CD8-positive, alpha-beta T cell (primary cell): ENCODE measurements at regions of chr1 and their contacts with region 1.

Region 1: GRCh38 chr1:41891199-41891896 is 27.4 kb downstream of the HIVEP3 start:
- DNase-seq: peak; percentile 22 to 89 (median 64)
- ATAC-seq: peak; percentile 98
- H3K4me3 ChIP-seq: peak overlapping the region; percentile 53 to 56
- H3K4me3 Mint-ChIP-seq: peak overlapping the region; percentile 81
- H3K27ac ChIP-seq: peak overlapping the region; percentile 58 to 74
- H3K27ac Mint-ChIP-seq: peak overlapping the region; percentile 93
- H3K4me1 ChIP-seq: peaks cover 28% of the 10 kb centered on the region
- H3K4me1 Mint-ChIP-seq: peaks cover 46% of the 10 kb centered on the region
- H3K27me3 ChIP-seq: no peaks in the 10 kb centered on the region
- H3K27me3 Mint-ChIP-seq: no peaks in the 10 kb centered on the region
- CTCF ChIP-seq: peak; percentile 60

Region 2: DNA sequence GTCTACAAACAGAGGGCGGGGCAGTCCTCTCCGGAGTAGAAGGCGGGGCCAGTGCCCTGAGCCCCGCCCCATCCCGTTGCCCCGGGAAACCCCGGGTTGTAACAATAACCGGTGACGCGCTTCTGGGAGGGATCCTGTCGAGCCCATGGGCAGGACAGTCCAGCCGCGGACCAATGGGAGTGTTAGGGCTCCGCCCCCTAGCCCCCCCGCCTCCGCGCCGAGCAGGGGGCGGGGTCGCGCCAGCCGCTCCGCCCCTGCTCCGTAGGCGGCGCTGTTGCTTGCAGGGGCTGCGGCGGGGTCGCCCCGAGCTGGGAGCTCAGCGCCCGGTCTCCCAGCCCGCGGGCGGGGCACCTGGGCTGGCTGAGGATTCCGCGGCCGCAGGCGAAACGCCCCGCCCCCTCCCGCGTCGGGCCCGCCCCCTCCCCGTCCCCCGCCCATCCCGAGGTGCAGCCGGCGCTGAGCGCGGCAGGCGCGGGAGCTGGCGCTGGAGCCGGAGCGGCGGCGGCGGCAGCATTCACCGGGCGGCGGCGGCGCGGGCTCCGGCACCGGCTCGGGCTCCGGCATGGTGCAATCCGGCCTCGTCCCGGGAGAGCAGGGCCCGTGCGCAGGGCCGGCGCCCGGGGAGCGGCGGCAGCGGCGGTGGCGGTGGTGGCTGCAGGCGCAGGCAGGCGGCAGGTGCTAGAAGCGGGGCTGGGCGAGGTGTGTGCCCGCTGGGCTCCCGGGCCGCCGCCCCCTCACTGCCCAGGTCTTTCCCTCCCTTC is 530.2 kb before region 1 on chr1 and contains the start of gene FOXO6:
- CTCF ChIA-PET with region 1: no interaction called
- POLR2A ChIA-PET with region 1: no interaction called
- intact Hi-C with region 1: loop called in 1 of 2 experiments (anchors 10 kb)
- DNase-seq: peak; percentile 85 to 97 (median 94)
- ATAC-seq: peak; percentile 90
- H3K4me3 ChIP-seq: peak within 1 kb of the TSS; percentile 35 to 52
- H3K4me3 Mint-ChIP-seq: peak within 1 kb of the TSS; percentile 82
- H3K27ac ChIP-seq: peak within 1 kb of the TSS; percentile 14 to 25
- H3K27ac Mint-ChIP-seq: peak within 1 kb of the TSS; percentile 28
- H3K4me1 ChIP-seq: peaks cover 22% of the 10 kb centered on the region
- H3K4me1 Mint-ChIP-seq: peaks cover 23% of the 10 kb centered on the region
- H3K27me3 ChIP-seq: peaks cover 10 to 11% of the 10 kb centered on the region in 2 experiments
- H3K27me3 Mint-ChIP-seq: peaks cover 29% of the 10 kb centered on the region
- CTCF ChIP-seq: no peak
- total RNA-seq, gene FOXO6: 1.4 to 1.7 TPM

Region 3: GRCh38 chr1:41751804-41752513 is 139.4 kb before region 1 on chr1:
- CTCF ChIA-PET with region 1: no interaction called
- POLR2A ChIA-PET with region 1: no interaction called
- intact Hi-C with region 1: loop called (anchors 1 to 5 kb)
- DNase-seq: peak in 1 of 9 experiments; percentile 38
- ATAC-seq: no peak
- H3K4me3 ChIP-seq: no peak overlapping the region
- H3K4me3 Mint-ChIP-seq: no peak overlapping the region
- H3K27ac ChIP-seq: no peak overlapping the region
- H3K27ac Mint-ChIP-seq: peak overlapping the region; percentile 55
- H3K4me1 ChIP-seq: peaks cover 47% of the 10 kb centered on the region
- H3K4me1 Mint-ChIP-seq: peaks cover 53% of the 10 kb centered on the region
- H3K27me3 ChIP-seq: no peaks in the 10 kb centered on the region
- H3K27me3 Mint-ChIP-seq: no peaks in the 10 kb centered on the region
- CTCF ChIP-seq: no peak

Region 4: GRCh38 chr1:41802532-41803501 is 88.5 kb before region 1 on chr1:
- CTCF ChIA-PET with region 1: interaction called, 3 read pairs
- POLR2A ChIA-PET with region 1: interaction called, 6 read pairs
- intact Hi-C with region 1: loop called in 1 of 2 experiments (anchors 2 kb)
- DNase-seq: peak in 8 of 9 experiments; percentile 14 to 74 (median 42)
- ATAC-seq: peak; percentile 42
- H3K4me3 ChIP-seq: peak overlapping the region in 1 of 2 experiments; percentile 0
- H3K4me3 Mint-ChIP-seq: peak overlapping the region; percentile 61
- H3K27ac ChIP-seq: peak overlapping the region; percentile 26 to 75
- H3K27ac Mint-ChIP-seq: peak overlapping the region; percentile 94
- H3K4me1 ChIP-seq: peaks cover 81% of the 10 kb centered on the region
- H3K4me1 Mint-ChIP-seq: peaks cover 87% of the 10 kb centered on the region
- H3K27me3 ChIP-seq: no peaks in the 10 kb centered on the region
- H3K27me3 Mint-ChIP-seq: no peaks in the 10 kb centered on the region
- CTCF ChIP-seq: no peak

Region 5: GRCh38 chr1:41812051-41812450 is 79.3 kb before region 1 on chr1:
- CTCF ChIA-PET with region 1: interaction called, 5 read pairs
- POLR2A ChIA-PET with region 1: interaction called, 4 read pairs
- intact Hi-C with region 1: loop called (anchors 2 to 5 kb)
- DNase-seq: peak in 8 of 9 experiments; percentile 25 to 71 (median 42)
- ATAC-seq: peak; percentile 62
- H3K4me3 ChIP-seq: no peak overlapping the region
- H3K4me3 Mint-ChIP-seq: no peak overlapping the region
- H3K27ac ChIP-seq: no peak overlapping the region
- H3K27ac Mint-ChIP-seq: no peak overlapping the region
- H3K4me1 ChIP-seq: peaks cover 16% of the 10 kb centered on the region
- H3K4me1 Mint-ChIP-seq: peaks cover 28% of the 10 kb centered on the region
- H3K27me3 ChIP-seq: no peaks in the 10 kb centered on the region
- H3K27me3 Mint-ChIP-seq: no peaks in the 10 kb centered on the region
- CTCF ChIP-seq: peak; percentile 58

Region 6: DNA sequence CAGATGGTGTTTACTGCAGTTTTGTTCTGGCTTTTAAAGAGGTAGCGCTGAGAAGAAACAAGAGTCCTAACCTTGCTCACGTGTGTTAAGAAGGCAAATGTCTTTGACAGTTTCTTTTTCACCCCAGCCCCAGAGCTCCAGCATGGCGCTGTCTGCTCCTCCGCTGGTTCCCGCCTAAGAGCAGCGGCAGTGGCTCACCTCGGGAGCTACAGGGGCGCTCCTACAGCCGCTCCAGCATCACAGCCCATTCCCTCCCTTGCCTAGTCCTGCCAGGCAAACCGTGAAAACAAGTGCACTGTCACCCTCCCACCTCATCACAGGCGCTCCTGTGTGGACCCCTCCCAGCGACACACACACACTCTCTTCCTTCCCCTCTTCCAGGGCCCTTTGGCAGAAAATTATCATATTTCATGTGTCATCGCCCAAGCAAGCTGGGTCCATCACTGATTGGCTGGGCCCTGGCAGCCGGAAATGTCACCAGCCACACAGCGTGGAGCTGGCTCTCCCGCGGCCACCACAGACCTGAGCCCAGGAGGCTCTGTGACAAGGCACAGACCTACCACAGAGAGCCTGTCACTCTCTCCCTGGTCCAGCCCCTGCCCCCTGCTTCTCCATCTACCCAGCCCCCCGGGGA is 28.5 kb after region 1 on chr1:
- CTCF ChIA-PET with region 1: interaction called, 61 read pairs
- POLR2A ChIA-PET with region 1: interaction called, 89 read pairs
- intact Hi-C with region 1: loop called (anchors 1 kb)
- DNase-seq: peak; percentile 39 to 90 (median 77)
- ATAC-seq: peak; percentile 81
- H3K4me3 ChIP-seq: peak overlapping the region; percentile 51 to 57
- H3K4me3 Mint-ChIP-seq: peak overlapping the region; percentile 95
- H3K27ac ChIP-seq: peak overlapping the region; percentile 56 to 74
- H3K27ac Mint-ChIP-seq: peak overlapping the region; percentile 98
- H3K4me1 ChIP-seq: peaks cover 43% of the 10 kb centered on the region
- H3K4me1 Mint-ChIP-seq: peaks cover 58% of the 10 kb centered on the region
- H3K27me3 ChIP-seq: no peaks in the 10 kb centered on the region
- H3K27me3 Mint-ChIP-seq: no peaks in the 10 kb centered on the region
- CTCF ChIP-seq: no peak

Region 7: DNA sequence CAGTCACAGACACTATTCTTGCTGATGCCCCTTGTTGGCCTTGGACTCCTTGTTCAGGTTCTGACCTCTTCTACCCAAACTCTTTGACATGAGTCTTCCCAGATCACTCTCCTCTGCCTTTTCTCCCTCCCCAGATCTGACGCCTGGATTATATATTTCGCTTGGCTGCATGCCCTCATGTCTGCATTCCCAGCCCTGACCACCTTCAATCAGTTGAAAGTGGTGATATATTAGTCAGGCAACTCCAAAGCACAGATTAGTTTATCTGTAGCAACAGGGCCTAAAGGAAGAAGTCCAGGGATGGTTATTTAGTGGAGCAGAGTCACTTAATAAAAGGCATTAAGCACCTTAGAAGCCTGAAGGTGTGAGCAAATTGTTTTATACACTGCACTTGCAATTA is 151.8 kb after region 1 on chr1:
- CTCF ChIA-PET with region 1: no interaction called
- POLR2A ChIA-PET with region 1: no interaction called
- intact Hi-C with region 1: no loop called
- DNase-seq: no peak
- ATAC-seq: no peak
- H3K4me3 ChIP-seq: no peak overlapping the region
- H3K4me3 Mint-ChIP-seq: no peak overlapping the region
- H3K27ac ChIP-seq: no peak overlapping the region
- H3K27ac Mint-ChIP-seq: no peak overlapping the region
- H3K4me1 ChIP-seq: no peaks in the 10 kb centered on the region
- H3K4me1 Mint-ChIP-seq: no peaks in the 10 kb centered on the region
- H3K27me3 ChIP-seq: no peaks in the 10 kb centered on the region
- H3K27me3 Mint-ChIP-seq: peaks cover 10% of the 10 kb centered on the region
- CTCF ChIP-seq: no peak

Region 8: DNA sequence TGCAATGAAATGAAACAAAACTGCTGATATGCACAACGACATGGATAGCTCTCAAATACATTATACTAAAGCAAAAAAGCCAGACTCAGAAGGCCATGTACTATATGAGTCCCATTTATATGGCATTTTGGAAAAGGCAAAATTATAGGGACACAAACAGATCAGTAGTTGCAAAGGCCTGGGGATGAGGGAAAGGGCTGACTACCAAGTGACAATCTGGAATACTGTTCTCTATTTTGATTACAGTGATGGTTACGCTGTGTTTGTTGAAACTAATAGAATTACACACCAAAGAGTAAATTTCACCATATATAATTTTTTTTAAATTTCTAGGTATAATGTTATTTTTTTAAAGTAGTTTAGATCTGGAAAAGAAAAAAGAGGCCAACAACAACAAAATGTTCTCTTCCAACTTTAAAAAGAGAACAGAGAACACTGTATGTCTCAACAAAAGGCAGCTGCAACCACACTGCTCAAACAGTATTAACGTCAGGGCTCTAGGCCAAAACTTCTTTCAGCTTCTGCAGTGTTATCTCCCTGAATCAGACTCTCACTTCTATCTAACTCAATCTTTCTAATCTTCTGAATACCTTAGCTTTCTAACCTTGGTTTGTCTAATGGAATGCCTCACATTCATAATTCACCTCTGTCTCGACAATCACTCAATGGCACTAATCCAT is 367.9 kb after region 1 on chr1:
- CTCF ChIA-PET with region 1: no interaction called
- POLR2A ChIA-PET with region 1: no interaction called
- intact Hi-C with region 1: no loop called
- DNase-seq: no peak
- ATAC-seq: no peak
- H3K4me3 ChIP-seq: no peak overlapping the region
- H3K4me3 Mint-ChIP-seq: no peak overlapping the region
- H3K27ac ChIP-seq: no peak overlapping the region
- H3K27ac Mint-ChIP-seq: peak overlapping the region; percentile 50
- H3K4me1 ChIP-seq: peaks cover 10% of the 10 kb centered on the region
- H3K4me1 Mint-ChIP-seq: peaks cover 58% of the 10 kb centered on the region
- H3K27me3 ChIP-seq: no peaks in the 10 kb centered on the region
- H3K27me3 Mint-ChIP-seq: no peaks in the 10 kb centered on the region
- CTCF ChIP-seq: no peak